ENCODE measurements at regions of chrX and their contacts with region 1.

Region 1: DNA sequence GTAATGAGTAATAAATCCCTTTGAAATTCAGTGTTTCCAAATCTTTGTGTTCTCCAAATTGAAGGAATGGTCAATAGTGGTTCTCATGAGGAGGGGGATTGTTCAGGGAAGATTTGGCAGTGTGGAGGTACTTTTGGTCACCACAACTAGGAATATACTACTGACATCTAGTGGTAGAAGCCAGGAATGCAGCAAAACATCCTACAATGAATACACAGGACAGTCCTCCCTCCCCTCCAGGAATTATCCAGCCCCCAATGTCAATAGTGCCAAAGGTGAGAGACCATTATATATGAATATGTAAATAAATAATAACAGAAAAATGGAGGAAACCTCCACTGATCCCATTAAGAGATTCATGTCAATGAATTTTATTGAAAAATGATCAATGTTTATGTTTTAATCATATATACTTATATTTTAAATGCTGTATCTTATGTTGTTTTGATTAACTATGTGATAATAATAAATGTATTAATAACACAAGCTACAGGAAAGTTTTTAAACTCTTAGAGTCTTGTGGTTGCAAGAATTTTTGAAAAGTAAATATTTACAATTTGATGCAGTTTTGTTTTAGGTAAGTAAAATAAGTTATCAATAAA is 14.4 kb upstream of the FAM9A start:
- DNase-seq: no peak
- H3K4me3 ChIP-seq: no peak overlapping the region
- H3K27ac ChIP-seq: no peak overlapping the region
- H3K4me1 ChIP-seq: no peaks in the 10 kb centered on the region
- H3K27me3 ChIP-seq: peaks cover 0 to 5% (median 0%) of the 10 kb centered on the region in 7 donors
- CTCF ChIP-seq: peak in 9 of 11 experiments; percentile 39 to 76 (median 69)
- POLR2A ChIP-seq: no peak

Region 2: GRCh38 chrX:8005678-8006347 is 809.8 kb before region 1 on chrX:
- intact Hi-C with region 1: loop called (anchors 10 kb)
- DNase-seq: no peak
- H3K4me3 ChIP-seq: no peak overlapping the region
- H3K27ac ChIP-seq: no peak overlapping the region
- H3K4me1 ChIP-seq: no peaks in the 10 kb centered on the region
- H3K27me3 ChIP-seq: no peaks in the 10 kb centered on the region
- CTCF ChIP-seq: no peak
- POLR2A ChIP-seq: no peak

Region 3: GRCh38 chrX:8147226-8147625 is 668.3 kb before region 1 on chrX:
- intact Hi-C with region 1: no loop called
- DNase-seq: no peak
- H3K4me3 ChIP-seq: no peak overlapping the region
- H3K27ac ChIP-seq: no peak overlapping the region
- H3K4me1 ChIP-seq: no peaks in the 10 kb centered on the region
- H3K27me3 ChIP-seq: no peaks in the 10 kb centered on the region
- CTCF ChIP-seq: no peak
- POLR2A ChIP-seq: no peak

Measured in spleen (tissue), 13 donors.